ENCODE measurements at regions of chr6 and their contacts with region 1.

Region 1: GRCh38 chr6:51855310-51856082 is 231.9 kb downstream of the PKHD1 start:
- DNase-seq: peak in 5 of 9 donors; percentile 8 to 31 (median 15)
- ATAC-seq: no peak
- H3K4me3 ChIP-seq: no peak overlapping the region
- H3K4me3 Mint-ChIP-seq: no peak overlapping the region
- H3K27ac ChIP-seq: no peak overlapping the region
- H3K27ac Mint-ChIP-seq: no peak overlapping the region
- H3K4me1 ChIP-seq: no peaks in the 10 kb centered on the region
- H3K4me1 Mint-ChIP-seq: peaks cover 0 to 2% (median 0%) of the 10 kb centered on the region in 7 donors
- H3K27me3 ChIP-seq: peaks cover 0 to 3% of the 10 kb centered on the region in 2 donors
- H3K27me3 Mint-ChIP-seq: peaks cover 3 to 39% (median 23%) of the 10 kb centered on the region in 5 donors

Region 2: DNA sequence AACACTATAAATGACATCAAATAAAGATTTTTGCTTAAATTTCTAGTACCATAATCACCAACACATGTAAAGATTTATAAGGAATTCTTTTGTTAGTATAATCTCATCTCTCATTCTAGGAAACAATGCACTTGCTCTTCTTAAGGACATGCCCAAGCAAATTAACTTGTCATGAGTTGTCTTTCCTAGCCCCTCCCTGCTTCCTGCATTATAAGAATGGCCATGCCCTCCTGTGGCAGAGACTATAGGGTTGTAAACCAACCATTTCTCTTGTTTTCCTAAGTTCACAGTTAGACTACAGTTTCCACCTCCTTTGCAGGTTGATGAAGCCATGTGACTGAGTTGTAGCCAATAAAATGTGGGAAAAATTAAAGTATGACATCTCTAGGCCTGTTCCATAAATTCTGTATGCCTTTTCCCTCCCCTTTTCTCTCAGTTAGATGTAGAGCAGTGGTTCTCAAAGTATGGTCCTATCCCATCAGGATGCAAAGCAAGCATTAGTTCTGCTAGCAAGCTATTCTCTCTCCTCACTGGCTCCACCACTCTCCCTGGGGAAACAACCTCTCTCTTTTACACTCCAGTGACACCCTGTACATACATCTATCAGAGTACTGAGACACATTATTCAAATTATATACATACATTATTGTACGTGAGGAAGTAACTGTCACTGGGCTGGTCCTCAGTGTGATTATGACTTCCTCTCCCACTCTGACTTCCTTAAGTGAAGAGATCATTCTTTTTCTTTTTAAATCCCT is 63.0 kb before region 1 on chr6:
- CTCF ChIA-PET with region 1: no interaction called
- POLR2A ChIA-PET with region 1: no interaction called
- intact Hi-C with region 1: no loop called
- DNase-seq: no peak
- ATAC-seq: no peak
- H3K4me3 ChIP-seq: no peak overlapping the region
- H3K4me3 Mint-ChIP-seq: no peak overlapping the region
- H3K27ac ChIP-seq: no peak overlapping the region
- H3K27ac Mint-ChIP-seq: no peak overlapping the region
- H3K4me1 ChIP-seq: no peaks in the 10 kb centered on the region
- H3K4me1 Mint-ChIP-seq: no peaks in the 10 kb centered on the region
- H3K27me3 ChIP-seq: no peaks in the 10 kb centered on the region
- H3K27me3 Mint-ChIP-seq: peaks cover 0 to 5% (median 0%) of the 10 kb centered on the region in 5 donors

Region 3: GRCh38 chr6:51959744-51960383 is 104.4 kb after region 1 on chr6:
- CTCF ChIA-PET with region 1: no interaction called
- POLR2A ChIA-PET with region 1: no interaction called
- intact Hi-C with region 1: loop called (anchors 1 kb)
- DNase-seq: peak in 2 of 9 donors; percentile 7 to 32
- ATAC-seq: no peak
- H3K4me3 ChIP-seq: no peak overlapping the region
- H3K4me3 Mint-ChIP-seq: no peak overlapping the region
- H3K27ac ChIP-seq: no peak overlapping the region
- H3K27ac Mint-ChIP-seq: no peak overlapping the region
- H3K4me1 ChIP-seq: no peaks in the 10 kb centered on the region
- H3K4me1 Mint-ChIP-seq: no peaks in the 10 kb centered on the region
- H3K27me3 ChIP-seq: no peaks in the 10 kb centered on the region
- H3K27me3 Mint-ChIP-seq: peaks cover 0 to 37% (median 20%) of the 10 kb centered on the region in 5 donors

Region 4: GRCh38 chr6:52020945-52021570 is 165.6 kb after region 1 on chr6:
- CTCF ChIA-PET with region 1: interaction called, 3 read pairs
- POLR2A ChIA-PET with region 1: no interaction called
- intact Hi-C with region 1: loop called (anchors 1 kb)
- DNase-seq: peak in 2 of 9 donors; percentile 6 to 15
- ATAC-seq: no peak
- H3K4me3 ChIP-seq: no peak overlapping the region
- H3K4me3 Mint-ChIP-seq: no peak overlapping the region
- H3K27ac ChIP-seq: no peak overlapping the region
- H3K27ac Mint-ChIP-seq: no peak overlapping the region
- H3K4me1 ChIP-seq: no peaks in the 10 kb centered on the region
- H3K4me1 Mint-ChIP-seq: no peaks in the 10 kb centered on the region
- H3K27me3 ChIP-seq: no peaks in the 10 kb centered on the region
- H3K27me3 Mint-ChIP-seq: peaks cover 2 to 16% (median 3%) of the 10 kb centered on the region in 5 donors

Measured in naive thymus-derived CD4-positive, alpha-beta T cell (primary cell).